Panc1 (cell line): ENCODE measurements at regions of chr7 and their contacts with region 1.

Region 1: DNA sequence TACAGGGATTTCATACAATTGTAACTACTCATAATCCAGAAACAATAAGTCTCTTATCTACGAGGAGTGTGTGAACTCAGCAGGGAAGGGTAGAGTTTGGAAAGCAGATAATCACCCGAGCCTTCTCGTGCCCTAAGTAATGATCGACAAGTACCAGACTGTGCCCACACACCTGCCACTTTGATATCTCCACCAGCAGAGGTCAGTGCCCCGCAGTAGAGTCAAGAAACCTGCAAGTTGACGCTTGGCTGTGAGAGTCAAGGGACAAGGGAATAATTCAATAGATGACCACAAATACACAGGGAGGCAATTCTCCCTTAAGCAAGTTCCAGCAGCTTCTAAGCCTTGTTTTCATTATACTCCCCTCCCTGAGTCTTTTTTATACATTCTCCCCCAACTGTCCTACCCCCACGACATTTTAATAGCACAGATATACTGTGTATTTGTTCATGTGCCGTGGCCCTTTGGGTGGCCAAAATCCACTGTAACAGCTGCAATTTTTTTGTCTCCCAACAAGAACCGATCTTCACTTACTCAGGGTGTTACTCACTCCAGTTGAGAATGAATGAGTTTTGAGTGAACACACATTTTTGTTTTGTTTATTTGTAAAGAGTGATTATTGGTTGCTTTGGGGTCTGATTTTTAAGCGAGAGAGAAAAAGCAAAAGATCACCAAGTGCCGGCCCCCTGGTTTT is 106.9 kb upstream of the RHEB start:
- DNase-seq: no peak
- ATAC-seq: peak; percentile 78
- H3K4me3 ChIP-seq: no peak overlapping the region
- H3K27ac ChIP-seq: peak overlapping the region; percentile 68
- H3K4me1 ChIP-seq: peaks cover 60% of the 10 kb centered on the region
- H3K27me3 ChIP-seq: no peaks in the 10 kb centered on the region
- CTCF ChIP-seq: peak; percentile 84

Region 2: GRCh38 chr7:151442776-151443496 is 183.6 kb before region 1 on chr7:
- CTCF ChIA-PET with region 1: no interaction called
- POLR2A ChIA-PET with region 1: interaction called, 14 read pairs
- in situ Hi-C with region 1: no loop called
- intact Hi-C with region 1: no loop called
- DNase-seq: no peak
- ATAC-seq: no peak
- H3K4me3 ChIP-seq: no peak overlapping the region
- H3K27ac ChIP-seq: peak overlapping the region; percentile 7; the same call in 1 of the 2 replicates
- H3K4me1 ChIP-seq: peaks cover 9% of the 10 kb centered on the region
- H3K27me3 ChIP-seq: no peaks in the 10 kb centered on the region
- CTCF ChIP-seq: no peak

Region 3: GRCh38 chr7:151570366-151570915 is 56.1 kb before region 1 on chr7:
- CTCF ChIA-PET with region 1: no interaction called
- POLR2A ChIA-PET with region 1: no interaction called
- in situ Hi-C with region 1: no loop called
- intact Hi-C with region 1: loop called (anchors 5 kb)
- DNase-seq: no peak
- ATAC-seq: no peak
- H3K4me3 ChIP-seq: no peak overlapping the region
- H3K27ac ChIP-seq: no peak overlapping the region
- H3K4me1 ChIP-seq: no peaks in the 10 kb centered on the region; the same call in 1 of the 2 replicates
- H3K27me3 ChIP-seq: no peaks in the 10 kb centered on the region
- CTCF ChIP-seq: peak; percentile 51; the same call in 1 of the 2 replicates

Region 4: GRCh38 chr7:151744656-151745638 is 118.4 kb after region 1 on chr7:
- CTCF ChIA-PET with region 1: interaction called, 3 read pairs
- POLR2A ChIA-PET with region 1: no interaction called
- in situ Hi-C with region 1: no loop called
- intact Hi-C with region 1: loop called (anchors 5 kb)
- DNase-seq: peak; percentile 95
- ATAC-seq: peak; percentile 86
- H3K4me3 ChIP-seq: peak overlapping the region in 1 of 2 experiments; percentile 3; a peak in 1 of 4 replicates
- H3K27ac ChIP-seq: peak overlapping the region; percentile 85
- H3K4me1 ChIP-seq: peaks cover 57% of the 10 kb centered on the region
- H3K27me3 ChIP-seq: no peaks in the 10 kb centered on the region
- CTCF ChIP-seq: peak; percentile 78

Region 5: GRCh38 chr7:151759591-151760042 is 133.0 kb after region 1 on chr7:
- CTCF ChIA-PET with region 1: no interaction called
- POLR2A ChIA-PET with region 1: no interaction called
- in situ Hi-C with region 1: no loop called
- intact Hi-C with region 1: loop called (anchors 5 kb)
- DNase-seq: no peak
- ATAC-seq: peak; percentile 81
- H3K4me3 ChIP-seq: no peak overlapping the region
- H3K27ac ChIP-seq: peak overlapping the region; percentile 85; the same call in 1 of the 2 replicates
- H3K4me1 ChIP-seq: peaks cover 50% of the 10 kb centered on the region
- H3K27me3 ChIP-seq: no peaks in the 10 kb centered on the region
- CTCF ChIP-seq: peak; percentile 96